Dorsolateral prefrontal cortex (tissue), 120 donors: ENCODE measurements at regions of chr7 and their contacts with region 1.

Region 1: GRCh38 chr7:72493850-72494661 is 81.9 kb upstream of the CALN1 start:
- DNase-seq: peak; percentile 49 to 88 (median 71)
- H3K4me3 ChIP-seq: no peak overlapping the region
- H3K27ac ChIP-seq: no peak overlapping the region
- H3K27me3 ChIP-seq: peaks cover 0 to 2% (median 0%) of the 10 kb centered on the region in 45 donors
- CTCF ChIP-seq: peak; percentile 61 to 91 (median 82)

Region 2: DNA sequence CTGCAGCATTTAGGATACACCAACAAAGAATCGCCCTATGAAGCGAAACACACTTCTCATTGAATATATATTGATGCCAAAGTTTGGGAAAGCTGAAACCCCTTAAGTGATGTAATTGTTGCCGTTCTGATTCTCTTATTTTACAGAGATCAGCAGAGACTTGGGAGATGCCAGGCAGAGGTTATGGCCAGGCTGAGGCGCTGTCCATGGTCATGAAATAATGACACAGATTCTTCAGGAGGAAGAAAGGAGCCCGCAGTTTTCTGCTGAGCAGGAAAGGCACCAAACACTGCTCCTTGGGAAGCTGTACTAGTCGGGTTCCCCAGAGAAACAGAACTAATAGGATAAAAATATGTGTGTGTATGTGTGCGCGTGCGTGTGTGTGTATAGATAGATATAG is 647.9 kb before region 1 on chr7:
- intact Hi-C with region 1: loop called (anchors 5 to 10 kb)
- DNase-seq: no peak
- H3K4me3 ChIP-seq: no peak overlapping the region
- H3K27ac ChIP-seq: no peak overlapping the region
- H3K27me3 ChIP-seq: no peaks in the 10 kb centered on the region
- CTCF ChIP-seq: no peak

Region 3: DNA sequence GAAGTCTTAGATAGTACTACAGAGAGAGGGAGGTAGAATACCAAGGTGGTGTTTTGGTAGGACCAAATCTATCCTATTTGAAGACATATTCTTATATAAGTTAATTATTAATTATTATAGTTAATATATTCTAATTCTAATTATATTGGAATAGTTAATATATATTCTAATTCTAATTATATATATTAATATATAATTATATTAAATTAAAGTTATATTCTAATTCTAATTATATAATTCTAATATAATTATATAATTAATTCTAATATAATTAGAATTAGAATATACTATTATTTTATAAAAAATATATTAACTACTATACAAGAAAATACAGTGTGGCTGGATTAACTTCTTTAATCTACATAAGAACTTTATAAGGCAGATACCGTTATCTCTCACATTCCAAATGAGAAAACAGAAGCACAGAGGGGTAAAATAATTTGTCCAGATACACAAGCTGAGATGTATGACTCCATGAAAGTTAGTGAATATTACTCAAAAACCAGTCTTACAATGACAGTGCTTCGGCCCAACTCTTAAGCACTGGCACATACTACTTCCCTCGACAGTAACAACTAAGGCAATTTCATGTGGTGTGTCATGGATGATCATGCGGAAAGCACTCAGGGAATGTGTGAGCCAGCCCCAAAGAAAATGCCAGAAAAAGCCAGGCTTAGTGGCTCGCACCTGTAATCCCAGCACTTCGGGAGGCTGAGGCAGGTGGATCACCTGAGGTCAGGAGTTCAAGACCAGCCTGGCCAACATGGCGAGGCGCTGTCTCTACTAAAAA is 291.3 kb after region 1 on chr7:
- intact Hi-C with region 1: loop called in 1 of 2 experiments (anchors 10 kb)
- DNase-seq: no peak
- H3K4me3 ChIP-seq: no peak overlapping the region
- H3K27ac ChIP-seq: no peak overlapping the region
- H3K27me3 ChIP-seq: no peaks in the 10 kb centered on the region
- CTCF ChIP-seq: no peak